Psoas muscle (tissue), 8 donors: ENCODE measurements at regions of chr1 and their contacts with region 1.

Region 1: DNA sequence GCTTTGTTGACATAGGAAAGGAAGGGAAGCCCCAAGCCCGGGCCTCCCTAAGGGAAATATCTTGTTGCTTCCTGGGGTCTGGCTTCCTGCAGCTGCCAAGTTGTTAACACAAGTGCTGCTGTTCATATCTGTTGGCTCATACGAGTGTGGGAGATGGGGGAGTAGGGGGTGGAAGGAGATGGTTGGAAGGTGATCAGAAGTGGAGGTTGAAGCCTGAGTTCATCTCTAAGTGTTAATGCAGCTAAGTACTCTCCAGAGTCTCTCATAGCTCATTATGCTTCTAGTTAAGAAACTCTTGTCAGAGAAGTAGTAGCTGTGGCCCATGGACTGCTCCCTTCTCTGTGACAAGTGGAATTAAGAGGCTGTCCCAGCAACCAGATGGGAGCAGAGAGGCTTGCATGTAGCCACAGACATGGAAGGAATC is 319.2 kb upstream of the SPAG17 start:
- DNase-seq: no peak
- ATAC-seq: peak in 3 of 4 donors; percentile 50 to 76 (median 64)
- H3K4me3 ChIP-seq: no peak overlapping the region
- H3K27ac ChIP-seq: peak overlapping the region; percentile 70
- H3K4me1 ChIP-seq: peaks cover 19% of the 10 kb centered on the region
- H3K27me3 ChIP-seq: no peaks in the 10 kb centered on the region
- CTCF ChIP-seq: no peak

Region 2: GRCh38 chr1:118151312-118151937 is 352.8 kb before region 1 on chr1:
- intact Hi-C with region 1: loop called in 1 of 2 experiments (anchors 10 kb)
- DNase-seq: peak in 1 of 2 donors; percentile 57
- ATAC-seq: peak in 1 of 4 donors; percentile 56
- H3K4me3 ChIP-seq: no peak overlapping the region
- H3K27ac ChIP-seq: no peak overlapping the region
- H3K4me1 ChIP-seq: no peaks in the 10 kb centered on the region
- H3K27me3 ChIP-seq: no peaks in the 10 kb centered on the region
- CTCF ChIP-seq: peak; percentile 76

Region 3: GRCh38 chr1:118223426-118223825 is 280.8 kb before region 1 on chr1:
- intact Hi-C with region 1: loop called in 1 of 2 experiments (anchors 10 kb)
- DNase-seq: peak in 1 of 2 donors; percentile 49
- ATAC-seq: peak; percentile 78 to 98 (median 95)
- H3K4me3 ChIP-seq: no peak overlapping the region
- H3K27ac ChIP-seq: no peak overlapping the region
- H3K4me1 ChIP-seq: peaks cover 3% of the 10 kb centered on the region
- H3K27me3 ChIP-seq: no peaks in the 10 kb centered on the region
- CTCF ChIP-seq: peak; percentile 65

Region 4: DNA sequence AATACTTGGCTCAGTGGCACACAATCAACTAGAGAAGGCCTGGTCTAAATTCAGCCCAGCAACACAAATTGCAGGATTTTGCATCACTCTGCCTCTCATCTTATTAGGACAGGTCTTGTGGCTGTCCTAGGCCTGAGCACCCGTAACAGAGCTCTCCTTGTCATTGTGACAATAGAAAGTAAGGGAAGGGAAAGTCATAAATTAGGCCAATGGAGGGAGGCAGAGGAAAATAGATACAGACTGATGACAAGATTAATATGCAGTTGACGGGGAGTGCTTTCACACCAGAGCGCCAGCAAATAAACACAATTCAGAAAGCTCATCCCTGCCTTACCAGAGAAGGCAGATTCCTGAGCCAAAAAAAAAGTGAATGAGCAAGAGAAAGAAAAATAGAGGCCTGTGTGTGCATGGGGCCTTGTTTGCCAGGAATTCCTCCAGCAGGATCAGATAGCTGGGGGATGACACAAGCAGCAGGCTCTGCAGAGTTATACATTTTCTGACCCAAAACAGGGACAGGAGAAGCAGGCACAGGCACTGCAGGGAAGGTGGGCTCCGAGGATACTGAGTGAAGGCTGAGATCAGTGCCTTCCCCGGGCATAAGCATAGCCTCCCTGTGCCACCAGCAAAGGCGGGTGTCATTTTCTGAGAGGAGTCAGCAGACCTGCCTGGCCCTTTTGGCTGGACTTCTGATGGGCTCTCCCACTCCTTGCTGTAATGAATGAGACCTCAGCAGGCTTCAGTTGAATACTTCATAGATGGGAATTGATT is 209.2 kb before region 1 on chr1:
- intact Hi-C with region 1: loop called (anchors 5 to 10 kb)
- DNase-seq: peak in 1 of 2 donors; percentile 53
- ATAC-seq: peak; percentile 23 to 46 (median 34)
- H3K4me3 ChIP-seq: no peak overlapping the region
- H3K27ac ChIP-seq: peak overlapping the region; percentile 88
- H3K4me1 ChIP-seq: peaks cover 82% of the 10 kb centered on the region
- H3K27me3 ChIP-seq: no peaks in the 10 kb centered on the region
- CTCF ChIP-seq: no peak

Region 5: DNA sequence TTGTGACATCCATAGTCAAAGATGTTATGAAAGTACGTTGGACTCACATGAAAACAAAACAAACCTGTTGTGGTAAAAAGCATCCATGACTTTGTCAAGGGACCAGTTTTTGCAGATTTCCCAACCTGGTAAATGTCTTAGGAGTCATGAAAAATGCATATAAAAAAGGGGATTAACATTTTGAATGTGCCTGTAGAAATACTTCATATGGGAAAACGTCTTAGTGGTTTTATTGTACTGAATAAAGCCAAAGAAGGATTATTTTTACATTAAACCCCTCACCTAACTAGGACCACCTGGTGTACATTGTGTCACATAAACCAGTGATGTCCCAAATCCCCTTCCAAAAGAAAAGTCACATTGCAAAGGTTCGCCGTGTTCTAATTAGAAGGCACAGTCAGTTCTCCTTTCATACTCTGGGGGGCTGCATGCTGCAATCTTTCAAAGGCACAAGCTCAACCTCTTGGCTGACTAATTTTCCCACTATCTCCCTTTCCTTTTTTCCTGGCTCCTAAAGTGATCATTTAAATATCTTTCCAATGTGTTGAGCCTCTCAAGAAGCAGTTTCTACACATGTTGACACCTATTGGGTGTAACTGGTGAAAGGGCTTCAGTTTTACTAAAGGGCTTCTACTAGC is 199.4 kb before region 1 on chr1:
- intact Hi-C with region 1: loop called in 1 of 2 experiments (anchors 10 kb)
- DNase-seq: no peak
- ATAC-seq: peak; percentile 22 to 58 (median 52)
- H3K4me3 ChIP-seq: no peak overlapping the region
- H3K27ac ChIP-seq: peak overlapping the region; percentile 88
- H3K4me1 ChIP-seq: peaks cover 44% of the 10 kb centered on the region
- H3K27me3 ChIP-seq: no peaks in the 10 kb centered on the region
- CTCF ChIP-seq: peak; percentile 58

Region 6: DNA sequence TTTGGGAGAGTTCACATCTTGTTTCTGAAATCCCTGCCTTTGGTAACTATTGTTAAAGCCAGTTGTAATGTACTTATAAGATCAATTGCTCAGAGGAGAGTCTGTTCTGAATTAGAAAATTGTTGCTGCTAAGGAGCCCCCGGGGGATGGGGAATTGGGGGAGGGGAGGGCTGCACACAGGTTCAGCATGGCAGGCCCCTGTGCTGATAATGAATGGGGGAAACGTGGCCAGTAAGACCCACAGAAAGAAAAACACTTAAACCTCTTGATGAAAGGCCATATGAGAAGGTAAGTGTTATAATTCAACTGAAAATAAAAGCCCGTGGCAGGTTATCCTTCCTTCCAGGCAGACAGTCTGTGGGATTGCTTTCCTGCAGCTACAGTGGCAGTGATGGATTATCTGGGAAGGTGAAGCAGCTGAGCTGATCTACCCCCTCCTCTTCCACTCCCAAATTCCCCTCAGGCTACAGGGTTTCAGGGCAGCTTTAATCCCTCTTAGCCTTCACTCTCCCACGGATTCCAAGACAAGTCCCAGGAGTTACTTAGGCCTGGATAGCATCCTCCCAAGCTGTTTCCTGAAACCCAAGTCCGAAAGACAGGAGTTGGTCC is 85.1 kb after region 1 on chr1:
- intact Hi-C with region 1: no loop called
- DNase-seq: no peak
- ATAC-seq: no peak
- H3K4me3 ChIP-seq: no peak overlapping the region
- H3K27ac ChIP-seq: no peak overlapping the region
- H3K4me1 ChIP-seq: no peaks in the 10 kb centered on the region
- H3K27me3 ChIP-seq: no peaks in the 10 kb centered on the region
- CTCF ChIP-seq: no peak